ENCODE measurements at regions of chr22 and their contacts with region 1.

Region 1: DNA sequence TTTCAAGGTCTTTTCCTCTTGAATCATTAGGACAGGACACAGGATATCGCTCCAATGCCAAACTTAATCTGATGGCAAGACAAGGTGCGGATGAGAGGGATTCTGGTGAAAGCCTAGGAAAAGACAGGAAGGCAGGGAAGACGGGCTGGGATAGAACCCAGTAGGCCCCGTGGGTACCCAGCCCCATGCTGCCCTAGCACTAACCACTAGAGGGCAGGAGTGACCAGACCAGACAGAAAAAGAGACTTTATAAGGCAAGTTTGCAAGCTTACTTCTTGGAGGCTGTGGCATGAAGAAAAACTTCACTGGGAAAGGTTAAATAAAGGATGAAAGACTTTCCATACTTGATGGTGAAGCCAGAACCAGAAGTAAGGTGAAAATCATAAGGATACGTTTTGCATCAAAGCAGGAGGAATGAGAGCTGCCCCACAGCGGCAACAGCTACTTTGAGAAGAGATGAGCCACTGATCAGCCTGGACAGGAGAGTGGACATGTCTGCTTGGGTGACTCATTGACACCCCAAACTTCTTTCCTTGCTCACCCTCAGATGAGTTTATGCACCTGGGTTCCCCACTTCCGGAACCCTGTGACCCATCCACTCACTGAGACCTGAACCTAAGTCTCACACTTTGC is 39.8 kb downstream of the SYN3 start:
- DNase-seq: no peak
- H3K4me3 ChIP-seq: no peak overlapping the region
- H3K27me3 ChIP-seq: no peaks in the 10 kb centered on the region; the same call in 1 of the 2 replicates
- CTCF ChIP-seq: peak; percentile 93

Region 2: DNA sequence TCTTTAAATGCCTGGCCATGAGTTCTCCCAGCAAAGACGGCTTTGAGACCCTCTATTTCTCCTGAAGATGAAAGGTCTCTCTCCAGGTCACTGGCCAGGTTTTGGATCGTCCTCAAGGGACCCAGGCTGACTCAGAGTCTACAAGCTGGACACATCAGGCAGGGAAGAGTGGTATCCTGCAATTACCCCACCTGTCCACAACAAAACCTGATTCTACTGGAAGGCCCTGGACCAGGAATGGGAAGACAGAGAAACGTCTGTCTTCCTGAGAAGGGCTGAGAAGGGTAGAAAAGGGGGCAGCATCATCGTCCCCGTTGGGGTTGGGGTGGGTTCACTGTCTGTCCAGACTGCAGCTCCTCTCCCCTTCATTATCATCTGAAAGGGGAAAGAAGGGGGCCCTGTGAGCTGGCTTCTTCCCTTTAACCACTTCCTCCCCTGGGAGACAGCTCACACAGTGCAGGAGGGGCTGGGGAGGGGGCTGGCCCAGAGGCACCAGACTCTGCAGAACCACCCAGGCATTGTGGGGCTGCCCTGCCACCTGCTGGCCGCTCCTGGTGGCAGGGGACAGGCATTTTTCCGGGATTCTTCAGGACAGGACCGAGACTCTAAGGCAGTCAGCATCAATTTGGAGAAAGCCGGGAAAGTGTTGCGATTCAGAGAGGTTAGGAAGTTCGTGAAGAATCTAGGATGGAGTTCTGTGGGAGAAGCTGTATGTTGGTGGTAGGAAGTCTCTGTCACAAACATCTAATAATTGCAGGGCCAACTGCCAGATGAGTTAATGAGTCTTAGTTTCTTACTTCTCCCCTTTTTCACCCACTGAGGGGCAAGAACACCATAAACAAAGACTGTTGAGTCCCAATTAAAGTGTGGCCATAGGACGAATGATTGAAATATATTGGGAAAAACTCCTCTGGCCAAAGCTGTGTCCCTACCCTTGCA is 17.7 kb before region 1 on chr22:
- CTCF ChIA-PET with region 1: interaction called, 12 read pairs
- POLR2A ChIA-PET with region 1: no interaction called
- DNase-seq: no peak
- H3K4me3 ChIP-seq: no peak overlapping the region
- H3K27me3 ChIP-seq: no peaks in the 10 kb centered on the region
- CTCF ChIP-seq: peak; percentile 95

Region 3: GRCh38 chr22:33038131-33038772 is 19.9 kb after region 1 on chr22:
- CTCF ChIA-PET with region 1: interaction called, 10 read pairs
- POLR2A ChIA-PET with region 1: no interaction called
- DNase-seq: no peak
- H3K4me3 ChIP-seq: no peak overlapping the region
- H3K27me3 ChIP-seq: no peaks in the 10 kb centered on the region; the same call in none of the 2 replicates
- CTCF ChIP-seq: no peak

Region 4: GRCh38 chr22:33049119-33049729 is 30.9 kb after region 1 on chr22:
- CTCF ChIA-PET with region 1: interaction called, 26 read pairs
- POLR2A ChIA-PET with region 1: no interaction called
- DNase-seq: peak; percentile 4
- H3K4me3 ChIP-seq: no peak overlapping the region
- H3K27me3 ChIP-seq: peaks cover 2% of the 10 kb centered on the region; the same call in 1 of the 2 replicates
- CTCF ChIP-seq: peak; percentile 96

Region 5: DNA sequence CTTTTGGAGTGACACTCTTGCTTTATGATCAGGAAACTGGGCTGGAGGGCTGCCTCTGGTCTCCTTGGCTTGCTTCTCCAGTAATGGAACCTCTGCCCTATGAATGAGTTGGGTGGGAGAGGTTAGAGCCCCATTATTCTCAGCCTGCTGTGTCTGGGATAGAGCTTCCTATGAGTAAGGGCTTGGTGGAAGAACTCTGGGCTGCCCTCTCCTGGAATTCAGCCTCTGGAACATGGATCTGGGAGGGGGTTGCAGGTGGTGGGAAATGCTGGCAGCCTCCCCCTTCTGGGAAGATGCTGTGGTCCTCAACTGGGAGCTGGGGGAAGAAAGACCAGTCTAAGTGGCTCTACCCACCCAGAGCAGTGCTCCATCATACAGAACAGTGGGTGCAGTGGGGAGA is 121.6 kb after region 1 on chr22:
- CTCF ChIA-PET with region 1: no interaction called
- POLR2A ChIA-PET with region 1: no interaction called
- DNase-seq: no peak
- H3K4me3 ChIP-seq: no peak overlapping the region
- H3K27me3 ChIP-seq: no peaks in the 10 kb centered on the region
- CTCF ChIP-seq: no peak